Upper lobe of right lung (tissue), 1 donor: ENCODE measurements at regions of chr17 and their contacts with region 1.

Region 1: GRCh38 chr17:44642834-44643233 is 13.4 kb upstream of the MEIOC start:
- DNase-seq: no peak
- ATAC-seq: no peak
- H3K4me3 ChIP-seq: no peak overlapping the region
- H3K27ac ChIP-seq: no peak overlapping the region
- H3K4me1 ChIP-seq: no peaks in the 10 kb centered on the region
- H3K27me3 ChIP-seq: peaks cover 6% of the 10 kb centered on the region
- CTCF ChIP-seq: no peak

Region 2: DNA sequence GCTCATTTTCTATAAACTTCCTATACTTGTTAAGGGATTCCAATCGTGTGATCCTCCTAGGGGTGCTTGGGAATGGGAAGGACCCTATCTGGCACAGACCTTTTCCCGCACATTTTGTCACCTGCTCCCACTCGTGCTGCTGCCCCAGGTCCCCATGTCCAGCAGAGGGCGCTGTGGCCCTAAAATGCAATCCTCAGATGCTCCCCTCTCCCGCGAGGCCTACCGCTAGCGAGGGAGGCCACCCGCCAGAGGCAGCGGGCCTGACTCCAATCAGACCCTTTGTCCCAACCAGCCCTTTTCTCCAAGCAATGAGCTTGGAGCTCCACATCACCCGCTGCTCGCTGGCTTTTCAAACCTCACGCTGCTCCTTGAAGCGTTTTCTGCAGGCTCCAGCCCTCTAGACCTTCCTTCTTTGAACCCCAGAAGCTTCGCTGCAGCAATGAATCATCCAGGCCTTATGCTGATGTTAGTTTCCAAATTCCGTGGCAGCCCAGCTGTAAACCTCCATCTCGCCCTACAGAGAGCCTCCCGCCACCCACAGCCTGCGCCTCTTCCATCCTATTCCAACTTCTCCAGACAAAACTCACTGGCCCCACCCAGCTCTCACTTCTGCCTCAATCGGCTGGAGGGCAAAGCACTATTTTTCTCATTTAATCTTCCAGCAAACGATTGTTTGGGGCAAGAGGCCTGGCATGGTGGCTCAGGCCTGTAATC is 109.1 kb before region 1 on chr17:
- intact Hi-C with region 1: loop called (anchors 5 kb)
- DNase-seq: peak; percentile 92
- ATAC-seq: peak; percentile 96
- H3K4me3 ChIP-seq: no peak overlapping the region
- H3K27ac ChIP-seq: no peak overlapping the region
- H3K4me1 ChIP-seq: peaks cover 9% of the 10 kb centered on the region
- H3K27me3 ChIP-seq: no peaks in the 10 kb centered on the region
- CTCF ChIP-seq: peak; percentile 94